Activated CD8-positive, alpha-beta T cell treated with anti-CD3 and anti-CD28 coated beads for 36 hours (primary cell): ENCODE measurements at regions of chr1 and their contacts with region 1.

Region 1: GRCh38 chr1:154404984-154405761 is at the start of gene IL6R:
- DNase-seq: peak; percentile 74
- ATAC-seq: peak; percentile 48
- H3K4me3 Mint-ChIP-seq: peak within 1 kb of the TSS; percentile 70
- H3K27ac Mint-ChIP-seq: peak within 1 kb of the TSS; percentile 78
- H3K4me1 Mint-ChIP-seq: peaks cover 89% of the 10 kb centered on the region
- H3K27me3 Mint-ChIP-seq: no peaks in the 10 kb centered on the region
- CTCF ChIP-seq: peak; percentile 42
- total RNA-seq, gene IL6R: 2.2 to 2.5 TPM

Region 2: GRCh38 chr1:154081386-154082126 is 323.6 kb before region 1 on chr1:
- CTCF ChIA-PET with region 1: no interaction called
- POLR2A ChIA-PET with region 1: no interaction called
- intact Hi-C with region 1: no loop called
- DNase-seq: no peak
- ATAC-seq: no peak
- H3K4me3 Mint-ChIP-seq: no peak overlapping the region
- H3K27ac Mint-ChIP-seq: no peak overlapping the region
- H3K4me1 Mint-ChIP-seq: no peaks in the 10 kb centered on the region
- H3K27me3 Mint-ChIP-seq: peaks cover 2% of the 10 kb centered on the region
- CTCF ChIP-seq: no peak

Region 3: DNA sequence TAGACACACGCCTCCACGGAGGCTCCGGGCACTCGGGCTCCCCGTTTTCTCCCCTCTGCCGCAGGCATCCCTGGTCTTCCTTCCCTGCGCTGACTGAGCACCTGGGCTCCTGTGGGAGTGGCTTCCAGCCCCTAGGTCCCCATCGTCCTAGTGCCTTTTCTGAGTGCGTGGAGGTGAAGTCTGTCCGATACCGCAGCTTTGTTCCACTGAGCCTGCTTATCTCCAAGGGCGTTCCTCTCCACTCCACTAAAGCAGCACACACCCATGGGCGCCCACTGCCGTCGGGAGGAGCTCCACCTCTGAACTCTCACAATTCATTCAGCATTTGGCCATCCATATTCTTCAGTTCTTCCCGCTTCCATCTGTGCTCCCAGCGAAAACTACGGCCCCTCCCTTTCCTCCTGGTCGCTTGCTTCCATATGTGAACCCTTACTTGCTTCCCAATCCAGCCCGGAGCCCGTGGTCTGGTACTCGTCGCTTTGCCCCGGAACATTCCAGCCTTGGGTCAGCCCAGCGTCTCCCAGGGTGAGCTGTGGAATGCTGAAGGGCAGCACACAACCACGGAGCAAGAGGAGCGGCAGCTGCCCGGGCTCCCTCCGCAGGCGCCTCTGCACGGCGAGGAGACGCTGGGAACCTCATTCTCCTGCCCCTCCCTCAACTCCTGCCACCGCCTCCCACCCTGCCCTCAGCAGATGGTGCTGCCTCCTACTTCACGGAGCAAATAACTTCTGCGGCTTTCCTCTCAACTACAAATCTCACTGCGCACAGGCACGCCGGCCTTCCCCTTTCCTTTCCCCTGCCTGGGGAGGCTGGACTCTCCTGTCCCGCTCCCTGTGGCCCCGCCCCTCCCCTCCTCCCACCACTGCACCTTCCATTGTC is 52.4 kb before region 1 on chr1:
- CTCF ChIA-PET with region 1: interaction called, 3 read pairs
- POLR2A ChIA-PET with region 1: interaction called, 3 read pairs
- intact Hi-C with region 1: loop called (anchors 5 kb)
- DNase-seq: peak; percentile 69
- ATAC-seq: peak; percentile 78
- H3K4me3 Mint-ChIP-seq: peak overlapping the region; percentile 69
- H3K27ac Mint-ChIP-seq: peak overlapping the region; percentile 64
- H3K4me1 Mint-ChIP-seq: peaks cover 35% of the 10 kb centered on the region
- H3K27me3 Mint-ChIP-seq: no peaks in the 10 kb centered on the region
- CTCF ChIP-seq: no peak

Region 4: DNA sequence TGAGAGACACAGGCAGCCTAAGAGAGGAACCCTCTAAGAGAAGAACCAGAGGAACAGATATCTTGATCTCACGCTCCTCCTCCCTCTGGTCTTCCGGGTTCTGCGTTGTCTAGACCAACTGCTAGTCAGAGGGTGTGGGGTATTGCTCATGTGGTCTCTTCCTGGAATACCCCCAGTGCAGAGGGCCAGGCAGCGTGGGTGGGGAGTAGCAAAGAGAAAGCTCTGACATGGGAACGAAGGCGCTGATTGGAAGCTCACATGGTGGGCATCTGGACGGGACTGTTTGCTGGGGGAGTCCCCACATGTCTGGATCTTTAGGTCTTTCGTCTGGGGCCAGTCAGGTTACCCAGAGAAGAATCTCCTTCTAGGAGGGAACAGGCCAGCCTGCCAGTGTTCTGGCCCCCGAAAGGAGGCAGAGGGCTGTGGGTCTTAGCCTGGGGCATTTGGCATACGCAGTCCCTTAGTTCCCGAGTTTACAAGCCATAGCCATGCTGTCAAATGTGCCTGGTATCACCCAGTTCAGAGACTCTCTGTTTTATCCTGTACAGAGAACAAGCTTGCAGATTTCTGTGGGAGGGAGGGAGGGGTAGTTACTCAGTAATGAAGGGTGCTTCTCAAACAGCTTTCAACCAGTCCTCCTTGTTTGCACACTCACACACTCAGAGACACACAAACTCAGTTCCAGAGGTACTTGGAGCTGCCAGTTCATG is 18.4 kb before region 1 on chr1:
- CTCF ChIA-PET with region 1: interaction called, 5 read pairs
- POLR2A ChIA-PET with region 1: interaction called, 15 read pairs
- intact Hi-C with region 1: no loop called
- DNase-seq: peak; percentile 99
- ATAC-seq: peak; percentile 94
- H3K4me3 Mint-ChIP-seq: peak overlapping the region; percentile 57
- H3K27ac Mint-ChIP-seq: peak overlapping the region; percentile 96
- H3K4me1 Mint-ChIP-seq: peaks cover 43% of the 10 kb centered on the region
- H3K27me3 Mint-ChIP-seq: no peaks in the 10 kb centered on the region
- CTCF ChIP-seq: no peak

Region 5: DNA sequence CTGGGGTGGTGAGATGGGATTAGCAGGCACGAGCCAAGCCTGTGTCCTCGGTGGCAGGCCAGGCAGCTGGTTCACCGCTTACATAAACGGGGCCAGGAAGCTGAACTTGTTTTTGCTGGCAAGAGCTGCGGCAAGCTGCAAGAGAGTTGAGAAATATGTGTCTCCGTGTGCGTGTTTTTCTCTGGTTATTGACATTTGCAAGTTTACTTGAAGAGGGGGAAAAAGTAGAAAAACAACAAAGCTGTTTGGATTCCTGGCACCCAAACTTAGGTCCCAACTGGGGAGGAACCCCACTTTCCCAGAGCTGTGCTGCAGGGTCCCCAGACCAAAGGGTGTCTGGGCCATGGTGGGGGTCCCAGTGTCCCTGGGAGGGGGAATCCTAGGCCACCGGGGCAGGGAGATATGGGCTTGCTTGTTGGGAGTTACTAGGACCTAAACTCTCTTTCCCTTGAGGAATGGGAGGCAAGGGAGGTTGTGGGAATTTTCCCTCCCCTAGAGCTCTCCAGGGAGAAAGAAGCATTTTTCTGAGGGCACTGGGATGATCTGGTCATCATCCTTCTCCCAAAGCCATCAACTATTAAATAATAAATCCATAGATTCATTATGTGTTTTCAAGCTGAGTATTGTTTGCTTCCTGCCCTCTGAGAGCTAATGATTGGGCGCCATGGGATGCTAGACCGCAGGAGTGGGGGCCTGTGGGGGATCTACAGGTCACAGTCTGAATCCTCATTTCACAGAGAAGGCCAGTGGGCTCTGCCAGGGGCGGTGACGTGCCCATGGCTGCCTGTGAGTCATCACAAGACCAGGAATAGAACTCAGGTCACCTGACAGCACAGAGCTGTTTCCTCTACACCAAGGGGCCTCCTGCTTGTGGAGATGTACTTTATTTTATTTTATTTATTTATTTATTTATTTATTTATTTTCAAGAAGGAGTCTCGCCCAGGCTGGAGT is 14.7 kb after region 1 on chr1:
- CTCF ChIA-PET with region 1: interaction called, 20 read pairs
- POLR2A ChIA-PET with region 1: interaction called, 39 read pairs
- intact Hi-C with region 1: no loop called
- DNase-seq: peak; percentile 83
- ATAC-seq: peak; percentile 78
- H3K4me3 Mint-ChIP-seq: peak overlapping the region; percentile 52
- H3K27ac Mint-ChIP-seq: peak overlapping the region; percentile 87
- H3K4me1 Mint-ChIP-seq: peaks cover 75% of the 10 kb centered on the region
- H3K27me3 Mint-ChIP-seq: no peaks in the 10 kb centered on the region
- CTCF ChIP-seq: no peak

Region 6: DNA sequence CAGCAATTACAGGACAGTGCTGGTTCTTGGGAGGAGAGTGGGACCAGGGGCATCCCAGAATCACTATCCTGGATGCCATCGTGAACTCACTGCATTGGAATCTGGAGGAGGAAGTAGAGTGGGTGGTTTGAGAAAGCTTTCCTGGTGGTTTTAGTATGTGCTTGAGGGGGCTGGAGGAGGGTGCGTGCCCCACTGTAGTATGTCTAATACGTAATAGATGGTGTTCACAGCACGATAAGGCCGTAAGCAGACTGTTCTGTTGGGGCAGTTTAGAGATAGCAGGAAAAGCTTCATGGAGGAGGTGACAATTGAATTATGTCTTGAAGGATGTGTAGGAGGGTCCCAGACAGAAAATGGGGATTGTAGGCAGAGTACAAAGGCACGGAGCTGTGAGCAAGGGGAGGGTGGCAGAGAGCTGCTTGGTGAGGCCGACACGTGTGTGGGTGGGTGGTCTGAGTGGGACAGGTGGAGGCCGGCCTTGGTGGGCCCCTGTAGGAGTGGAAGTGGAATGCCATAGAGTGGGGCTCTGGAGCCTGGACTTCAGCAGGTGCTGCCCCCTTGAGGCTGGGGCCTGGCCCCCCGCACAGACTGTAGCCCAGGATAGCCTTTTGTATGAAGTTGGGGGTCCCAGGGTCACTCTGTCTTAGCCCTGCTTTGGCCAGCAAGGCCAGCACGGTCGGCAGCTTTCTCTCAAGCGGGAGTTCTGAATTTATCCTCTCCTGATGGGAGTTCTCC is 37.0 kb after region 1 on chr1:
- CTCF ChIA-PET with region 1: interaction called, 7 read pairs
- POLR2A ChIA-PET with region 1: interaction called, 5 read pairs
- intact Hi-C with region 1: loop called (anchors 2 kb)
- DNase-seq: no peak
- ATAC-seq: no peak
- H3K4me3 Mint-ChIP-seq: no peak overlapping the region
- H3K27ac Mint-ChIP-seq: peak overlapping the region; percentile 51
- H3K4me1 Mint-ChIP-seq: peaks cover 68% of the 10 kb centered on the region
- H3K27me3 Mint-ChIP-seq: no peaks in the 10 kb centered on the region
- CTCF ChIP-seq: peak; percentile 37